ENCODE measurements at regions of chr11 and their contacts with region 1.

Region 1: DNA sequence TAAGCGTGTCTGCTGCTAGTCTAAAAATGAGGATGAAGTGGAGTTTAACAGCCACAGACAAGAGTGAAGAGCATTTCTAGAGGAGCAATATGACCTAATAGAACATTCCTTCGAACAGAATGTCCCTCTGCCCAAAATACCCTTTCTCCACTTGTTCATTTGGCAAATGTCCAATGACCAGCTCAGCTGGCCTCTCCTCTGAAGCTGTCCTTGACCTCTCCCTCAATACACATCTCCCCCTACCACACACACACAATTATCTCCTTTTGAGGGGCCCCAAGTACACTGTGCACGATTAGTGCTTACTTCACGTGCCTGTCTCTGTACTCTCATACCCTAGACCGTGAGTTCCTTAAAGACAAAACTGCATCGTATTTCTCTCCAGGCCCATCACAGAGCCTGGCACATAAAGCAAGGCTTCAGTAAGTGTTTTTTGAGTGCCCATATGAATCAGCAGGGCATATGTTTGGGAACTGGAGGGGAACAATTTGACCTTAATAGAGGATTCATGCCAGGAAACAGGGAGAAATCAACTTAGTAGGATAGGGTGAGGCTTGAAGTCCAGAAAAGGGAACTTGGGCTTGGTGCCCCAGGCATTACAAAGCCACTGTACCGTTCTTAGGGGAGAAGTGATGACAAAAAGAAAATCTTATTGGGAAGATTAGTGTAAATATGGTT is 18.1 kb upstream of the NCAM1 start:
- DNase-seq: no peak
- ATAC-seq: peak; percentile 82 to 87

Region 2: DNA sequence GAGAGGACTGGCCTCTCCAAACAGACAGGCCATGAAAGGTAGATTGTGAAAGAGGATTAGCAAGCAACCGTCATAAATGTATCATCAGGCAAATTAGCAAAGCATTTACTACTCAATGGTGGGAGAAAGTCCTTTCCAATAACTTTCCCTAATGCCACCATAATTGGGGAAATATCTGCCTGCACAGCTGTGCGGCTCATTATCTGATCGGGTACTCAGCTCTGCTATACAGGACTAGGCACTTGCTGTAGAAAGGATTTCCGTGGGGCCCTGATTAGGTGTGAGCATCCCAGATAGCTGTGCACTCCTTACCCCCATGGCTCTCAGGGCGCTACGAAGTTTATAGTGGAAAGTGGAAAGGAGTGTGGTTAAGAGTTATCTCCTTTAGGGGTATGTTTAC is 372.8 kb before region 1 on chr11:
- intact Hi-C with region 1: no loop called
- DNase-seq: no peak
- ATAC-seq: no peak

Region 3: GRCh38 chr11:112784323-112785073 is 158.6 kb before region 1 on chr11:
- intact Hi-C with region 1: loop called in 1 of 2 experiments (anchors 10 kb)
- DNase-seq: peak; percentile 84
- ATAC-seq: peak; percentile 75 to 83